ENCODE measurements at regions of chr1 and their contacts with region 1.

Region 1: GRCh38 chr1:24364975-24365678 is 46.0 kb downstream of the GRHL3 start:
- DNase-seq: peak; percentile 63
- ATAC-seq: peak; percentile 99
- H3K4me3 Mint-ChIP-seq: no peak overlapping the region
- H3K27ac Mint-ChIP-seq: no peak overlapping the region
- H3K4me1 Mint-ChIP-seq: peaks cover 14% of the 10 kb centered on the region
- H3K27me3 Mint-ChIP-seq: peaks cover 3% of the 10 kb centered on the region

Region 2: DNA sequence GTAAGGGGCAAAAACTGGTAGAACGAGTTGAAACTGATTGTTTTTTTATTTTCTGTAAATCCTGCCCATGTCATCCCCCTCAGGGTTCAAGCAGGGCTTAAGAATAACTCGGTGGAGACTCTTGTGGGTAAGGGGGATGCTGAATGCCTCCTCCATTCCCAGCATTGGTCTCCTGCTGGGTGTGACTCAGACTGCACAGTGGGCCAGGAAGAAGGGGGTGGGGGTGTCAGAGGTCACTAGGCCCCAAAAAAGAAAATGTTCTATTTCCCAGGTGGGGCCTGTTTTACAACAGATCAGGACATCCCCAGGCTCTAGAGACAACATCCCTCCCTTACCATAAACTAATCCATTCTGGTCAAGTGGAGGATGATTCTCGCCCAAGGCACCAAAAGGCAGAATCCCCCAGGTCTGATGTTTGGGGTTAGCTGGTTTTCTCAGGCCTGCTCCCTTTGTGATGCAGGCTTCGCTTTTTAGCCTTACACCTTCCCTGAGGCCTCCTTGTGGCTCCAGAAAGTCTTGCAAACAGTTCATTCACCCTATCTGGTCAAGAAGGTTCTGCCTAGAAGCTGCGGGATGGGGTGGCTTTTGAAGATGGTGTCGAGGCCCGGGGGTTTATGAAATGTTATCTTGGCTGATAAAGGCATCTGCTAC is 56.6 kb before region 1 on chr1:
- CTCF ChIA-PET with region 1: no interaction called
- POLR2A ChIA-PET with region 1: no interaction called
- intact Hi-C with region 1: loop called in 1 of 2 experiments (anchors 1 kb)
- DNase-seq: no peak
- ATAC-seq: no peak
- H3K4me3 Mint-ChIP-seq: no peak overlapping the region
- H3K27ac Mint-ChIP-seq: no peak overlapping the region
- H3K4me1 Mint-ChIP-seq: peaks cover 7% of the 10 kb centered on the region
- H3K27me3 Mint-ChIP-seq: peaks cover 21% of the 10 kb centered on the region

Region 3: DNA sequence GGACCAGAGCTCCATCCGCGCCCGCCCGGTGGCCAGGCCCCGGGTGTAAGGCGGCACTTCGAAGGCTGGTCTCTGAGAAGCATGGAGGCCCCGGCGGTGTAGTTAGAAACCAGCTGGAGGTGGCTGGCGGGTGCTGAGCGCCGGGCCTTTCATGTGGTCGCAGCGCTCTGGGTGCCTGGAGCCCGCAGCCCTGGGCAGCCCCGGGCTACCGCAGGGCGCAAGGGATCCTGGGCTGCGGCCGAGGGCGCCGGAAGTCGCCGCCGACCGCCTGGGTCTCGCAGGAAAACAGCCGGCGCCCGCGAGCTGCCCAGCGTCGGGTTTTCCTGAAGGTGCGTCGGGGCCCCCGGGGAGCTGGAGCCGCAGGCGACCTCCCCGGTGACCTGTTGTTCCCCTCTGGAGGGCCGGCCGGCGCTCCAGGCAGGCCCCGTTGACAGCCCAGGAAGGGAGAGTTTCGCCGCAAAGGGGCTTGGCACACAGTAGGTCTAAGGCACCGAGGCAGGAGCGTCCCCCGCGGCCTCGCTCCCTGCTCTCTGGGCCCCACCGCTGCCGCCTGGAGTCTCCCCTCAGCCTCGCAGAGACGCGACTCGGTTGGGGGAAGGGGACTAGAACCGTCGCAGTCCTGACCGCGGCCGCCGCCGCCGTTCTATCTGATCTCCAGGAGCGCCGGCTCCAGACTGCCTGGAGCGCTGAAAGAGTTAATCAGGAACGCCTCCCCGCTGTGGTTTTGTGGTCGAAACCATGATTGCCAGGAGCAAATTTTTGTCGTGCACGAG is 43.2 kb before region 1 on chr1:
- CTCF ChIA-PET with region 1: interaction called, 5 read pairs
- POLR2A ChIA-PET with region 1: no interaction called
- intact Hi-C with region 1: loop called (anchors 5 kb)
- DNase-seq: peak; percentile 87
- ATAC-seq: peak; percentile 76
- H3K4me3 Mint-ChIP-seq: peak overlapping the region; percentile 62
- H3K27ac Mint-ChIP-seq: peak overlapping the region; percentile 51
- H3K4me1 Mint-ChIP-seq: peaks cover 40% of the 10 kb centered on the region
- H3K27me3 Mint-ChIP-seq: peaks cover 70% of the 10 kb centered on the region

Region 4: DNA sequence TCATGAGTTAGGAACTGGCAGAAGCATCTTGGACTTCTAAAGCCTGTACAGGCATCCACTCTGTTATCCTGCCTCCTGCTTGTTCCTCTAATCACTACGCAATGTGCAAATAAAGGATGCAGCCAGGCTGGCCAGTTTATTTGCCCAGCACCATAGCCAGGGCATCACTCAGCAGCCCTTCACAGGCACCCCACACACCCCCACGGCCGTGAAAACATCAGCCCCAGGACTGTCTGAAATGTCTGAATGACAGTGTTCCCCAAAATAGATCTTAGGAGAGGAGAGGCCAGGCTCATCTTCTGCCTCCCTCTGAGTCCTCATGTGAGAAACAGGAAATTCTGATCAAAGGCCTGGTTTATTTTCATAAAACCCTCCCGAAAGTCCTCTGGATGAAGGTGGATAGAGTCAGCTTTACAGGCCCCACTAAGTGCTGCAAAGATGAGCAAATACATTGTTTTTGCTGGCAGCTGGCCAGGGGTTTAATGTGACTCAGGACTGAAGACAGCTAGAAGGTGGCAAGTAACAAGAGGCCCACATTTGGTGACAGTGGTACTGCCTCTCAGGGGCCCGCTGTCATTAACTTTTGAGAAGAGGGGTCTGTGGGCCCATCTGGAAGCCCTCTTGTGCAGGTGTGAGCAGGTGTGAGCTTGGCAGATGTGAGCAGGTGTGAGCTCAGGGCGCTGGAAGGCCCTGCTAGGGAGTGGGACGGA is 13.1 kb before region 1 on chr1:
- CTCF ChIA-PET with region 1: no interaction called
- POLR2A ChIA-PET with region 1: no interaction called
- intact Hi-C with region 1: loop called in 1 of 2 experiments (anchors 1 kb)
- DNase-seq: peak; percentile 92
- ATAC-seq: peak; percentile 72
- H3K4me3 Mint-ChIP-seq: no peak overlapping the region
- H3K27ac Mint-ChIP-seq: peak overlapping the region; percentile 79
- H3K4me1 Mint-ChIP-seq: peaks cover 39% of the 10 kb centered on the region
- H3K27me3 Mint-ChIP-seq: no peaks in the 10 kb centered on the region

Region 5: DNA sequence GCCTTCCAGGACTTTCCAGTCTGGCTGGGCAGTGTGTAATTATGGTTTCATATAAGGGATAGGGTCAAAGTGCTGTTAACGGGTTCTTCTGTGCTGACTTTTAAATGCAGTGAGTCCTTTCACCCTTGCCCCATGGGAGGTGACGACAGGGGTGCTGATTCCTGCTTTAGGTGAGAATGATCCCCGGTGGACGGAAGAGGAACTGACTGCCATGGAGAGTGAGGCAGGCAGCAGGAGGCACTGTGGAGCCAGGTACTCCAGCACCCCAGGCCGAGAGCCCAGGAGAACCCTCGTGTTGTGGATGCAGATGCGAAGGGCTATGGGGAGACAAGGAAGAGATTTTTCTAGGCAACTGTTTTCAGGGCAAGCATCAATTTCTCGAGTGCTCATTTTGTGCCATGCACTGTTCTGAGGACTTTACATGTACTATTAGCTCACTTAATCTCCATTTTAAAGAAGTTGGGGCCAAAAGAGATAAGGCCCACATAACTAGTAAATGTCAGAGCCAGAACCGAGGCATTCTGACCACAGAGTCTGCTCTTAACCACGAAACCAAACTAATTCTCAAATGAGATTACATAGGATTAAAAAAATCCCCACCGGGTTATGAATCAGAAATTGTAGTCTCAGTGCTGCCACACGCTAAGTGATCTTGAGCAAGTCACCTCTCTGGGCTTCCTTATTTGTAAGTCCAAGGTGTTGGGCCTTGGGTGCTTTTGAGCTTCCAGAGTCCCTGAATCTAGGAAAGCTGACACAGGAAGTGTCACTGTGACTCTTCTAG is 20.2 kb after region 1 on chr1:
- CTCF ChIA-PET with region 1: interaction called, 13 read pairs
- POLR2A ChIA-PET with region 1: no interaction called
- intact Hi-C with region 1: loop called in 1 of 2 experiments (anchors 1 kb)
- DNase-seq: peak; percentile 69
- ATAC-seq: peak; percentile 57
- H3K4me3 Mint-ChIP-seq: no peak overlapping the region
- H3K27ac Mint-ChIP-seq: peak overlapping the region; percentile 55
- H3K4me1 Mint-ChIP-seq: peaks cover 29% of the 10 kb centered on the region
- H3K27me3 Mint-ChIP-seq: no peaks in the 10 kb centered on the region